PC-3 (cell line): ENCODE measurements at regions of chr14 and their contacts with region 1.

Region 1: GRCh38 chr14:92603309-92604242 is 90.0 kb downstream of the RIN3 start:
- DNase-seq: peak; percentile 68
- ATAC-seq: peak; percentile 33
- H3K4me3 ChIP-seq: no peak overlapping the region
- H3K27ac ChIP-seq: no peak overlapping the region
- H3K4me1 ChIP-seq: peaks cover 47% of the 10 kb centered on the region
- H3K27me3 ChIP-seq: no peaks in the 10 kb centered on the region
- CTCF ChIP-seq: peak; percentile 68

Region 2: GRCh38 chr14:92135267-92135666 is 468.3 kb before region 1 on chr14:
- CTCF ChIA-PET with region 1: no interaction called
- POLR2A ChIA-PET with region 1: no interaction called
- intact Hi-C with region 1: loop called (anchors 5 kb)
- DNase-seq: peak; percentile 43
- ATAC-seq: no peak; the same call in 1 of the 2 replicates
- H3K4me3 ChIP-seq: no peak overlapping the region
- H3K27ac ChIP-seq: no peak overlapping the region
- H3K4me1 ChIP-seq: no peaks in the 10 kb centered on the region
- H3K27me3 ChIP-seq: no peaks in the 10 kb centered on the region
- CTCF ChIP-seq: peak; percentile 77

Region 3: GRCh38 chr14:92259613-92260357 is 343.8 kb before region 1 on chr14:
- CTCF ChIA-PET with region 1: no interaction called
- POLR2A ChIA-PET with region 1: no interaction called
- intact Hi-C with region 1: no loop called
- DNase-seq: no peak
- ATAC-seq: no peak
- H3K4me3 ChIP-seq: no peak overlapping the region
- H3K27ac ChIP-seq: no peak overlapping the region
- H3K4me1 ChIP-seq: no peaks in the 10 kb centered on the region
- H3K27me3 ChIP-seq: peaks cover 16% of the 10 kb centered on the region; the same call in 1 of the 2 replicates
- CTCF ChIP-seq: no peak

Region 4: DNA sequence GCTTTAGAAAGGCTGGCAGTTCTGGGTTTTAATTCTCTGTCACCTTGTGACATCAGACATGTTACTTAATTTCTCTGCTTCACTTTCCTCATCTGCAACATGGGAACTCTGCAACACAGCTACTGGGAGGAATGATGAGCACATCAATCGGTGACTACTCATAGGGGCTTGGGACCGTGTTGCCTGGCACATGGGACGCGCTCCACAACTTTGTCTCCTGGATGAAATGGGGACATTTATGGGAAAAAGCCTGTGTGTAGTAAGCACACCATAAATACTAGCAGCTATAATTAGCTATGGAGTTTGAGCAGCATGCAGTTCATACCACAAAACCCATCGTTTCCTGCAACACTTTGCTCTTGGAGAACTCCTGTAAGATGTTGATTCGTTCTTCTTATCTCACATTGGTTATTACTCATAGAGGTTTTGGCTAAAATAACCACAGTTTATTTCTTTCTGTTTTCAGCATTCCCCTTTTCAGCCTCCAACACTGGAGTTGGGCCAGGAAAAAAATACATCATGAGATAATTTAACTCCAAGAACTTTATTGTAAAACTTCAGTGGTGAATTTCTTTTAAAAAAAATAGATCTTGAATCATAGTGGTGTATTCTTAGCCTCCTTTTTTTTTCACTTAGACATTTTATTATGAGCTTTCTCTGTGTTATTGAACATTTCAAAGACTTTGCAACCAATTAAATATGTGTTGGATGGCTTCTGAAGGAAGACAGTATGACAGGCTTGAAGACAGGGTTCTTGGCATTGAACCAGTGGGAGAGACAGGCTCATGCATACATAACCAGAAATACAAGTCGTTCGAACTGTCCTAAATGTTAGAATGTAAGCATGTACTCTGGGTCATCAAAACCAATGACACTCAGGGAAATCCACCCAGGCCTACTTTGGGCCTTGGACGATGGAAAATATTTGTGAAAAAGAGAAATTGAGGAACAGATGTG is 17.3 kb before region 1 on chr14:
- CTCF ChIA-PET with region 1: no interaction called
- POLR2A ChIA-PET with region 1: no interaction called
- intact Hi-C with region 1: loop called (anchors 1 kb)
- DNase-seq: peak; percentile 77
- ATAC-seq: peak; percentile 79
- H3K4me3 ChIP-seq: no peak overlapping the region
- H3K27ac ChIP-seq: peak overlapping the region; percentile 64
- H3K4me1 ChIP-seq: peaks cover 23% of the 10 kb centered on the region
- H3K27me3 ChIP-seq: no peaks in the 10 kb centered on the region
- CTCF ChIP-seq: no peak

Region 5: GRCh38 chr14:92637228-92637627 is 33.7 kb after region 1 on chr14:
- CTCF ChIA-PET with region 1: no interaction called
- POLR2A ChIA-PET with region 1: no interaction called
- intact Hi-C with region 1: no loop called
- DNase-seq: no peak
- ATAC-seq: no peak
- H3K4me3 ChIP-seq: no peak overlapping the region
- H3K27ac ChIP-seq: no peak overlapping the region
- H3K4me1 ChIP-seq: no peaks in the 10 kb centered on the region; the same call in 1 of the 2 replicates
- H3K27me3 ChIP-seq: no peaks in the 10 kb centered on the region
- CTCF ChIP-seq: no peak

Region 6: GRCh38 chr14:92649935-92650545 is 46.5 kb after region 1 on chr14:
- CTCF ChIA-PET with region 1: no interaction called
- POLR2A ChIA-PET with region 1: no interaction called
- intact Hi-C with region 1: loop called (anchors 1 kb)
- DNase-seq: peak; percentile 72
- ATAC-seq: no peak
- H3K4me3 ChIP-seq: no peak overlapping the region
- H3K27ac ChIP-seq: peak overlapping the region; percentile 58
- H3K4me1 ChIP-seq: peaks cover 52% of the 10 kb centered on the region
- H3K27me3 ChIP-seq: no peaks in the 10 kb centered on the region
- CTCF ChIP-seq: no peak

Region 7: GRCh38 chr14:92706406-92706805 is 102.8 kb after region 1 on chr14:
- CTCF ChIA-PET with region 1: no interaction called
- POLR2A ChIA-PET with region 1: no interaction called
- intact Hi-C with region 1: no loop called
- DNase-seq: no peak
- ATAC-seq: no peak
- H3K4me3 ChIP-seq: no peak overlapping the region
- H3K27ac ChIP-seq: no peak overlapping the region
- H3K4me1 ChIP-seq: peaks cover 4% of the 10 kb centered on the region; the same call in 1 of the 2 replicates
- H3K27me3 ChIP-seq: no peaks in the 10 kb centered on the region
- CTCF ChIP-seq: no peak

Region 8: DNA sequence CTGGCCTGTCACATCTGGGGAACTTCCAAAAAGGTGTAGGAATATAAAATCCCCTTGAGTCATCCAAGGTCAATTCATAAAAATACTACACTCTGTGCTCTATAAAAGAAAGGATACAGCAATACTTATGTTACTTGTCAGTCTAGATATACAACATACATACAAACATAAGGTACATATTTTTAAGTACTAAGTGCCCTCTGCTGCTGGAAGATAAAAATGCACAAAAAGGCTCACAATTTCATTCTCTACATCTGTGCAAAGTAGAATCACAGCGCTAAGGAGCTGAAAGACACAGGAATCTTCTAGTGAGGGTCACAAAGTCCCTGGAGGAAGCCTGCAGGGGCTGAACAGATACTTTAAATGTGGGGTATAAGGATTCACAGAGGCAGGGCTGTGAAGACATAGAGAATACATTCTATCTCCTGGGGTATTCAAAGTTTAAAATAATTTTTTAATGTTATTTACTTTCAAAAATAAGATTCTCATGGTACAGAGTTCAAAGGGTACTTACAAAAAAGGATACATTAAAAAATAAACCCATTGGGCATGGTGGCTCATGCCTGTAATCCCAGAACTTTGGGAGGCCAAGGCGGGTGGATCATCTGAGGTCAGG is 180.3 kb after region 1 on chr14:
- CTCF ChIA-PET with region 1: no interaction called
- POLR2A ChIA-PET with region 1: no interaction called
- intact Hi-C with region 1: loop called (anchors 10 kb)
- DNase-seq: peak; percentile 85
- ATAC-seq: peak; percentile 93
- H3K4me3 ChIP-seq: no peak overlapping the region
- H3K27ac ChIP-seq: peak overlapping the region; percentile 53; the same call in 1 of the 2 replicates
- H3K4me1 ChIP-seq: peaks cover 26% of the 10 kb centered on the region
- H3K27me3 ChIP-seq: no peaks in the 10 kb centered on the region
- CTCF ChIP-seq: peak; percentile 83

Region 9: DNA sequence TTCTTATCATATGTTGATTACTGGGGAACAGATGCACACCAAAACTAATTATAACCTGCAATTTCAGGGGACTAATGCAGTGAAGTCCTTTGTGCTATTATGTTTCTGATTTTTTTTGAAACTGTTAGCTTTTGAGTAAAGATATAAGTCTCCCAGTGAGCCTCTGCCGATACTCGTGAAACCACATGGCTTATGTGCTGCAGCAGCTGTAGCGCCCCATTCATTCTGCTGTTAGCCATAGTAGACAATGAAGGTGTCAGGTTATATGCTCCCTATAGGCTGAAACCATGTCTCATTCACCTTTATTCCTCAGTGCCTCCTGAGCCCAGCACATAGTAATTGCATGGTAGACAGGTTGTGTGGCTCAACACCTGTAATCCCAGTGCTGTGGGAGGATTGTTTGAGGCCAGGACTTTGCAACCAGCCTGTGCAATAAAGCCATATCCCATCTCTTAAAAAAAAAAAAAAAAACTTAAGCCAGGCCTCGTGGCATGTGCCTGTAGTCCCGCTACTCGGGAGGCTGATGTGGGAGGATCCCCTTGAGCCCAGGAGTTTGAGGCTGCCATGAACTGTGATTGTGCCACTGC is 215.5 kb after region 1 on chr14:
- CTCF ChIA-PET with region 1: no interaction called
- POLR2A ChIA-PET with region 1: no interaction called
- intact Hi-C with region 1: no loop called
- DNase-seq: no peak
- ATAC-seq: no peak
- H3K4me3 ChIP-seq: no peak overlapping the region
- H3K27ac ChIP-seq: no peak overlapping the region
- H3K4me1 ChIP-seq: no peaks in the 10 kb centered on the region
- H3K27me3 ChIP-seq: no peaks in the 10 kb centered on the region
- CTCF ChIP-seq: no peak